Dorsolateral prefrontal cortex (tissue), 120 donors: ENCODE measurements at regions of chr2 and their contacts with region 1.

Region 1: GRCh38 chr2:189674374-189675112 is at the start of gene ANKAR:
- DNase-seq: peak; percentile 79 to 91 (median 84)
- H3K4me3 ChIP-seq: peak within 1 kb of the TSS; percentile 58 to 96 (median 79)
- H3K27ac ChIP-seq: peak within 1 kb of the TSS; percentile 86 to 99 (median 96)
- H3K27me3 ChIP-seq: no peaks in the 10 kb centered on the region
- CTCF ChIP-seq: peak; percentile 41 to 97 (median 85)
- total RNA-seq, gene ANKAR: 10.6 to 36.5 (median 18.1) TPM

Region 2: GRCh38 chr2:189580658-189581353 is 93.7 kb before region 1 on chr2 and contains the start of gene SLC40A1:
- intact Hi-C with region 1: no loop called
- DNase-seq: peak in 5 of 10 donors; percentile 21 to 66 (median 53)
- H3K4me3 ChIP-seq: peak within 1 kb of the TSS; percentile 45 to 79 (median 63)
- H3K27ac ChIP-seq: peak within 1 kb of the TSS in 57 of 59 donors; percentile 10 to 91 (median 77)
- H3K27me3 ChIP-seq: peaks cover 0 to 42% (median 5%) of the 10 kb centered on the region in 45 donors
- CTCF ChIP-seq: peak in 1 of 56 donors; percentile 7
- total RNA-seq, gene SLC40A1: 2.6 to 13.9 (median 7.7) TPM

Region 3: DNA sequence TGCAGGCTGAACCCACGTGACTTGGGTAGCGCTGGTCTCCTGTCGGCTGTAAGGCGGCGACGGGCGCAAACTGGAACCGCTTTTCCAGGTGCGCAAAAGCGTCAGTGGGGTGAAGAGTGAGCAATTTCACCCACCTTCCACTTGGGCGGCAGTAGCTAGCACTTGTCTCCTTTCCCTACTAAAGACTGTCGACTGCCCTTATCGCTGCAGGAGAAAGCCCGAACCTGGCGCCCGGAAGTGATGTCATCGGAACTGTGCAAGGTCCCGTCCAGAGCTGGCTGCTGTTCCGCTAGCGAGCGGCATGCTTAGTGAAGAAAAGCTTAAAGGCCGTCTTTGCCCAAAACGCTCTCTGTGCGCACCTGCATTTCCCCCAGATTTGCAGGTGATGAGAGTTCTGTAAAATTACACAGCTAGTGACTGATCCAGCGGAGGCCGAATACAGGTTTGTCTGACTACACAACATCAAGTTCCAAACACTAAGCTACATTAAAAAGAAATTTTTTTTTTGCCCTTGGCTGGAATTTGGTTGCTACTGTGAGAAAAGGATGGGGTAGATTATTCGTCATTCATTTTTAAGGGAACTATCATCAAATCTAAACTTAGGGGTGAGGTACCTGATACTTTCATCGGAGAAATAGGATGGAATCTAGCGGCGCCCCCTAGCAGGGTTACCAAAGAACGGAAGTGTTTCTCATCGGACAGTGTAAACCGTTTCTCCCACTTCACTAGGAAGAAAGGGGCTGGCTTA is 88.2 kb after region 1 on chr2 and contains the start of gene OSGEPL1:
- intact Hi-C with region 1: loop called in 1 of 2 experiments (anchors 5 kb)
- DNase-seq: peak; percentile 93 to 97 (median 96)
- H3K4me3 ChIP-seq: peak within 1 kb of the TSS; percentile 61 to 98 (median 85)
- H3K27ac ChIP-seq: peak within 1 kb of the TSS; percentile 68 to 99 (median 95)
- H3K27me3 ChIP-seq: no peaks in the 10 kb centered on the region
- CTCF ChIP-seq: peak; percentile 31 to 76 (median 58)
- total RNA-seq, gene OSGEPL1: 5.5 to 18.6 (median 9.7) TPM